ENCODE measurements at regions of chr5 and their contacts with region 1.

Region 1: GRCh38 chr5:180575571-180575970 is 15.7 kb downstream of the SCGB3A1 start:
- DNase-seq: no peak
- ATAC-seq: no peak
- H3K4me3 Mint-ChIP-seq: no peak overlapping the region
- H3K27ac Mint-ChIP-seq: no peak overlapping the region
- H3K4me1 Mint-ChIP-seq: peaks cover 10% of the 10 kb centered on the region
- H3K27me3 Mint-ChIP-seq: no peaks in the 10 kb centered on the region
- CTCF ChIP-seq: no peak

Region 2: DNA sequence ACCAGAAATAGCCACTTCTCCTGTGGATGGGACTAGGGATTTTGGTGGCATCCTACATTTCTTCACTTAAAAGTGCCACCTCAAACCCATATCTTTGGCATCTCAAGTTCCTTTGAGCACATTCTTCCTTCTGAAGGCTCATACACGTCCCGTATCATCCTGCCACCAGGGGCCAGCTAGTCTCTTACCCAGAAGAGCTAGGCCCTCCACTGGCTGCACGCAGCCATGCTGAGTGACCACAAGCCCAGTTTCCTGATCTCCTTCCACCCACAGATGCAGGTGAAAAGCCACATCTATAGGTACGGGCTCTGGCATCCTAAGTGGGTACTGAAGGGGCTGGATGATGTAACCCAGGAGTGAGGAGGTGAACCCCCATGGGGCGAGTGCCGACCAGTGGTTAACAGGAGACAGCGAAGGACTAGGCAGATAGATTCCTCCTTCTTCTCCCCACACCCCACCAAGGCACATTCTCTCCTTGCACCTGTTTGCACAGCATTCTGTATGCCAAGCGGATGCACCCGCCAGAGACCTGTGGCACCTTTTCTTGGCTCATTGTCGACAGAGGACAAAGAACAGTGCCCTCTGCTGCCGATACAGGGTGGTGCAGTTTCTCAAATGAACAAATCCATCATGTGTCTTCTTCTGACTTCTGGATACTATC is 30.1 kb after region 1 on chr5:
- CTCF ChIA-PET with region 1: interaction called, 11 read pairs
- POLR2A ChIA-PET with region 1: no interaction called
- intact Hi-C with region 1: no loop called
- DNase-seq: peak; percentile 87
- ATAC-seq: peak; percentile 90
- H3K4me3 Mint-ChIP-seq: no peak overlapping the region
- H3K27ac Mint-ChIP-seq: no peak overlapping the region
- H3K4me1 Mint-ChIP-seq: peaks cover 6% of the 10 kb centered on the region
- H3K27me3 Mint-ChIP-seq: no peaks in the 10 kb centered on the region
- CTCF ChIP-seq: peak; percentile 85

Measured in activated CD8-positive, alpha-beta T cell treated with anti-CD3 and anti-CD28 coated beads for 36 hours (primary cell).